GM12878 (cell line): ENCODE measurements at regions of chr3 and their contacts with region 1.

Region 1: GRCh38 chr3:168865022-168865551 is 769.4 kb upstream of the GOLIM4 start:
- DNase-seq: no peak
- ATAC-seq: no peak
- H3K4me3 ChIP-seq: no peak overlapping the region
- H3K27ac ChIP-seq: no peak overlapping the region
- H3K4me1 ChIP-seq: no peaks in the 10 kb centered on the region
- H3K27me3 ChIP-seq: no peaks in the 10 kb centered on the region
- CTCF ChIP-seq: peak; percentile 47 to 58 (median 51); a peak in 5 of 6 replicates
- EP300 ChIP-seq: no peak
- POLR2A ChIP-seq: no peak
- RAD21 ChIP-seq: peak; percentile 53

Region 2: GRCh38 chr3:167716920-167717319 is 1148.2 kb before region 1 on chr3:
- CTCF ChIA-PET with region 1: no interaction called
- POLR2A ChIA-PET with region 1: no interaction called
- RAD21 ChIA-PET with region 1: no interaction called
- SMC1A ChIA-PET with region 1: no interaction called
- in situ Hi-C with region 1: no loop called
- intact Hi-C with region 1: no loop called
- DNase-seq: no peak
- ATAC-seq: no peak
- H3K4me3 ChIP-seq: no peak overlapping the region
- H3K27ac ChIP-seq: no peak overlapping the region
- H3K4me1 ChIP-seq: no peaks in the 10 kb centered on the region
- H3K27me3 ChIP-seq: no peaks in the 10 kb centered on the region
- CTCF ChIP-seq: no peak
- EP300 ChIP-seq: no peak
- POLR2A ChIP-seq: no peak
- RAD21 ChIP-seq: no peak

Region 3: DNA sequence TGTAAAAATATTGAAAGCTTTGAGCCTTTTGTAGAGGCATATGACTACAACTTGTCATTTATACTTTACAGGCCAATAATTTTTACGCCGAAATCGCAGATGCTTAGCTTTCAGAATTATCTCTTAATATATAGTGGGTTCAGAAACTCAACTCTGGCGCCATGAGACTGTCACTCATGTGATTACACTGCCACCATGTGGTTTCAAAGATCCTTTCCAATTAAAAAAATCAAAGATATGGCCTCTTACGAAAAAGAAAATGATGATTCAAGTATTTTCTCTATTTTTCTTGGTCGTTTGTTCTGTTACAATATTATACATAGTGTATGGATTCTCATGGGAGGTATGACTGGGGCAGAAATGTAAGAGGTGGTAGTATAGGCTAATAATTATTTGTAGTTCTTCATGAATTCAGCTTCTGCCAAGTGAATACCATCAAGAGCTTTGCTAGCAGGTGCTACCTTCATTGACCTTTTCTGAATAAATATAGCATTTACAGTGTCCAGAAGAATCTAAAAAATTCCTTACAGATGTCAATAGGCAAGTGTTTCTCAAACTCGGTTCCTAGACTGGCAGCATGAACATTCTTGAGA is 17.7 kb before region 1 on chr3:
- CTCF ChIA-PET with region 1: interaction called, 15 read pairs
- POLR2A ChIA-PET with region 1: no interaction called
- RAD21 ChIA-PET with region 1: no interaction called
- SMC1A ChIA-PET with region 1: interaction called, 8 read pairs
- in situ Hi-C with region 1: no loop called
- intact Hi-C with region 1: no loop called
- DNase-seq: peak; percentile 12
- ATAC-seq: peak; percentile 77
- H3K4me3 ChIP-seq: no peak overlapping the region
- H3K27ac ChIP-seq: no peak overlapping the region
- H3K4me1 ChIP-seq: no peaks in the 10 kb centered on the region
- H3K27me3 ChIP-seq: no peaks in the 10 kb centered on the region
- CTCF ChIP-seq: peak; percentile 41 to 76 (median 46); a peak in 5 of 6 replicates
- EP300 ChIP-seq: no peak
- POLR2A ChIP-seq: no peak
- RAD21 ChIP-seq: peak; percentile 79

Region 4: GRCh38 chr3:168877890-168878289 is 12.8 kb after region 1 on chr3:
- CTCF ChIA-PET with region 1: interaction called, 23 read pairs
- POLR2A ChIA-PET with region 1: no interaction called
- RAD21 ChIA-PET with region 1: interaction called, 6 read pairs
- SMC1A ChIA-PET with region 1: no interaction called
- in situ Hi-C with region 1: no loop called
- intact Hi-C with region 1: no loop called
- DNase-seq: no peak
- ATAC-seq: no peak; the same call in 2 of the 3 replicates
- H3K4me3 ChIP-seq: no peak overlapping the region
- H3K27ac ChIP-seq: no peak overlapping the region
- H3K4me1 ChIP-seq: no peaks in the 10 kb centered on the region
- H3K27me3 ChIP-seq: no peaks in the 10 kb centered on the region
- CTCF ChIP-seq: no peak
- EP300 ChIP-seq: no peak
- POLR2A ChIP-seq: no peak
- RAD21 ChIP-seq: no peak

Region 5: GRCh38 chr3:169744366-169745054 is 879.4 kb after region 1 on chr3:
- CTCF ChIA-PET with region 1: interaction called, 19 read pairs
- POLR2A ChIA-PET with region 1: no interaction called
- RAD21 ChIA-PET with region 1: interaction called, 10 read pairs
- SMC1A ChIA-PET with region 1: interaction called, 3 read pairs
- in situ Hi-C with region 1: no loop called
- intact Hi-C with region 1: loop called (anchors 2 kb)
- DNase-seq: no peak
- ATAC-seq: peak; percentile 48; the same call in 2 of the 3 replicates
- H3K4me3 ChIP-seq: no peak overlapping the region
- H3K27ac ChIP-seq: no peak overlapping the region
- H3K4me1 ChIP-seq: no peaks in the 10 kb centered on the region
- H3K27me3 ChIP-seq: no peaks in the 10 kb centered on the region
- CTCF ChIP-seq: peak in 2 of 3 experiments; percentile 35 to 48; a peak in 3 of 6 replicates
- EP300 ChIP-seq: no peak
- POLR2A ChIP-seq: no peak
- RAD21 ChIP-seq: peak; percentile 72